Caco-2 (cell line): ENCODE measurements at regions of chr18 and their contacts with region 1.

Region 1: GRCh38 chr18:79964330-79965118 is at the start of gene HSBP1L1:
- DNase-seq: peak; percentile 78 to 85
- H3K4me3 ChIP-seq: peak within 1 kb of the TSS; percentile 67
- H3K4me3 Mint-ChIP-seq: peak within 1 kb of the TSS; percentile 75
- H3K27ac Mint-ChIP-seq: peak within 1 kb of the TSS; percentile 85
- H3K4me1 ChIP-seq: peaks cover 7% of the 10 kb centered on the region; the same call in 1 of the 2 replicates
- H3K4me1 Mint-ChIP-seq: peaks cover 7% of the 10 kb centered on the region
- H3K27me3 ChIP-seq: no peaks in the 10 kb centered on the region
- H3K27me3 Mint-ChIP-seq: no peaks in the 10 kb centered on the region
- CTCF ChIP-seq: no peak
- total RNA-seq, gene HSBP1L1: 25.7 and 25.9 TPM in 2 replicates

Region 2: GRCh38 chr18:79679111-79679872 is 285.2 kb before region 1 on chr18 and contains the start of gene CTDP1:
- CTCF ChIA-PET with region 1: no interaction called
- POLR2A ChIA-PET with region 1: no interaction called
- intact Hi-C with region 1: loop called (anchors 10 kb)
- DNase-seq: peak; percentile 93 to 95
- H3K4me3 ChIP-seq: peak within 1 kb of the TSS; percentile 87
- H3K4me3 Mint-ChIP-seq: peak within 1 kb of the TSS; percentile 76
- H3K27ac Mint-ChIP-seq: peak within 1 kb of the TSS; percentile 90
- H3K4me1 ChIP-seq: no peaks in the 10 kb centered on the region
- H3K4me1 Mint-ChIP-seq: no peaks in the 10 kb centered on the region
- H3K27me3 ChIP-seq: no peaks in the 10 kb centered on the region
- H3K27me3 Mint-ChIP-seq: no peaks in the 10 kb centered on the region
- CTCF ChIP-seq: no peak
- total RNA-seq, gene CTDP1: 14.7 and 16.1 TPM in 2 replicates

Region 3: GRCh38 chr18:79988451-79989194 is 24.1 kb after region 1 on chr18 and contains the start of gene TXNL4A:
- CTCF ChIA-PET with region 1: no interaction called
- POLR2A ChIA-PET with region 1: no interaction called
- intact Hi-C with region 1: loop called (anchors 1 kb)
- DNase-seq: peak; percentile 64 to 69
- H3K4me3 ChIP-seq: peak within 1 kb of the TSS; percentile 89
- H3K4me3 Mint-ChIP-seq: peak within 1 kb of the TSS; percentile 71
- H3K27ac Mint-ChIP-seq: peak within 1 kb of the TSS; percentile 71
- H3K4me1 ChIP-seq: peaks cover 4% of the 10 kb centered on the region; the same call in 1 of the 2 replicates
- H3K4me1 Mint-ChIP-seq: peaks cover 10% of the 10 kb centered on the region
- H3K27me3 ChIP-seq: no peaks in the 10 kb centered on the region
- H3K27me3 Mint-ChIP-seq: no peaks in the 10 kb centered on the region
- CTCF ChIP-seq: no peak
- total RNA-seq, gene TXNL4A: 80.2 and 83.3 TPM in 2 replicates

Region 4: DNA sequence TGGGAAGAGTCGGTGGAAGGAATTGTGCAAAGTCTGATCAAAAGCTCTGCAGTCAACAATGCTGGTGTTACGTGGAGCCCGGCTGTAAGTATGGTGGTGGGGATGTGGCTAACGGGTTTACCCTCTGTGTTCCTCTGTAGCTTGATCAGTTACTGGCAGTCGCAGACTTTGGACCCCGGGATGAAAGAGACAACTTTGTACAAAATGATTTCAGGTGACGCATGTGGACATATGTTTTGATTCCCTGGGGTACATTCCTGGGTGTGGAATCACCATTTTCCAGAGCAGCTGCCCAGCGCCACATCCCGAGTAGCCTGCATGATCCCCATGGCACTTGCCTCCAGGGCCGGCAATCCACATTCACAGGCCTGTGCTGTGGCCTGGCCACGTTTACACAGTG is 79.5 kb after region 1 on chr18:
- CTCF ChIA-PET with region 1: no interaction called
- POLR2A ChIA-PET with region 1: no interaction called
- intact Hi-C with region 1: no loop called
- DNase-seq: no peak
- H3K4me3 ChIP-seq: no peak overlapping the region
- H3K4me3 Mint-ChIP-seq: no peak overlapping the region
- H3K27ac Mint-ChIP-seq: no peak overlapping the region
- H3K4me1 ChIP-seq: no peaks in the 10 kb centered on the region
- H3K4me1 Mint-ChIP-seq: no peaks in the 10 kb centered on the region
- H3K27me3 ChIP-seq: no peaks in the 10 kb centered on the region
- H3K27me3 Mint-ChIP-seq: no peaks in the 10 kb centered on the region
- CTCF ChIP-seq: no peak